Prostate gland (tissue), 2 donors: ENCODE measurements at regions of chr1 and their contacts with region 1.

Region 1: DNA sequence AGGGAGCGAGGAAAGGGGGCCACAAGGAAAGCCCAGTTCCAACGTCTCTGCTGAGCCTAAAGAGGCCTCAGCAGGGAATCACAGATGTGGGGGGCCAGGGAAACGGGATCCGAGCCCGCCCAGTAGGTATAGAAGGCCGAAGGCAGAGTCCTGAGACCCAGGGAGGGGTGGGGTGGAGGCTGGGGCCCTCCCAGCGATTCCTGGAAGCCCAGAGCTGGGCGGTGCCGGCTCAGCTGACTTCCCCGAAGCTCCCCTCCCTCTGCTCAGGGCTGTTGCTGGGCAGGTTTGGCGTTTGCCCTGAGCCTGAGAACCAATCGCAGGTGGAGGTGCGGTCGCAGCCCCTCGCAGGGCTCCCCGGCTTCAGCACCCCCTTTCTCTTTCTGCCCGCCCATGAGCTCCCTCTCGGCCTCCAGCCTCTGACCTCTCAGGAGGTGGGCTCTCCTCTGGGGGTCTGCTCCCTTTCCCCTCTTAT is 12.8 kb downstream of the ADAMTSL4 start:
- DNase-seq: peak; percentile 97
- H3K4me3 ChIP-seq: peak overlapping the region; percentile 31 to 43
- H3K27ac ChIP-seq: peak overlapping the region; percentile 100
- H3K4me1 ChIP-seq: peaks cover 40% of the 10 kb centered on the region
- H3K27me3 ChIP-seq: no peaks in the 10 kb centered on the region
- CTCF ChIP-seq: no peak
- POLR2A ChIP-seq: peak; percentile 56

Region 2: GRCh38 chr1:150578965-150579798 is 17.2 kb after region 1 on chr1 and contains the start of gene MCL1:
- intact Hi-C with region 1: loop called (anchors 2 kb)
- DNase-seq: peak; percentile 93
- H3K4me3 ChIP-seq: peak within 1 kb of the TSS; percentile 88 to 93
- H3K27ac ChIP-seq: peak within 1 kb of the TSS; percentile 98 to 100
- H3K4me1 ChIP-seq: no peaks in the 10 kb centered on the region
- H3K27me3 ChIP-seq: no peaks in the 10 kb centered on the region
- CTCF ChIP-seq: peak in 2 of 4 experiments; percentile 45 to 64
- POLR2A ChIP-seq: peak; percentile 86
- total RNA-seq, gene MCL1: 161 to 168 TPM

Region 3: DNA sequence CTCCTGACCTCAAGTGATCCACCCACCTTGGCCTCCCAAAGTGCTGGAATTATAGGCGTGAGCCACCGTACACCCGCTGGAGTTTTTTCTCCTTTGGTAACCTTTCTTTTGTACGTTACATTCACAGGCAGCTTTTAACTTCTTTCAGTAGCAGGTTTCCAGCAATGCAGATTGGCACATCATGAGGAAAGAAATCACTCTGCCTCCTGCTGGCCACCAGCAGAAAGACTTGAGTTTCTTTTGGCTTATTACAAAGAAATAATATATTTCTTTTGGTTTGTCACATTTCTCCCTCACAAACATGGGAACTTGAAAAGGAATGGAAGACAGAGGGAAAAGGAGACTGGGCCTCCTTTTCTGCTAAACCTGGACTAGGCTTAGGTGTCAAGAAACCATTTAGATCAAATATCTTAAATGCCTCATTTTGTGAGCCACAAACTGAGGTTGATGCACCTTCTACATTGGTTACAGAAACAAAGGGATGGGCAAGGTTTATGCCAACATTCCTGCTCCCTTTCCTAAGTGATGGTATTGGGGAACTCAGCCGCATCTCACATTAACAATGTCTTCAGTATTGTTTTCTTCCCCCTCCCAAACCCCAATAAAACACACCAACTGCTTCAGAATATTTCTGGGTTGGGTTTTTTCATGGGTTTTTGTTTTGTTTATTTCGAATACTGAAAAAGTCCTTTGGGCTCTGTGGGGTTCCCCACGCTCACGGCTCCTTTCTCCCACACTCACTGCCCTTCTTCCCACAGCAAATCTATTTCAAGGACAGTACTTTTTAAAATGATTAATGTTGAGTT is 59.7 kb after region 1 on chr1:
- intact Hi-C with region 1: loop called (anchors 2 kb)
- DNase-seq: peak; percentile 37
- H3K4me3 ChIP-seq: no peak overlapping the region
- H3K27ac ChIP-seq: peak overlapping the region; percentile 68 to 77
- H3K4me1 ChIP-seq: peaks cover 8% of the 10 kb centered on the region
- H3K27me3 ChIP-seq: no peaks in the 10 kb centered on the region
- CTCF ChIP-seq: peak in 3 of 4 experiments; percentile 66 to 72 (median 72)
- POLR2A ChIP-seq: no peak

Region 4: DNA sequence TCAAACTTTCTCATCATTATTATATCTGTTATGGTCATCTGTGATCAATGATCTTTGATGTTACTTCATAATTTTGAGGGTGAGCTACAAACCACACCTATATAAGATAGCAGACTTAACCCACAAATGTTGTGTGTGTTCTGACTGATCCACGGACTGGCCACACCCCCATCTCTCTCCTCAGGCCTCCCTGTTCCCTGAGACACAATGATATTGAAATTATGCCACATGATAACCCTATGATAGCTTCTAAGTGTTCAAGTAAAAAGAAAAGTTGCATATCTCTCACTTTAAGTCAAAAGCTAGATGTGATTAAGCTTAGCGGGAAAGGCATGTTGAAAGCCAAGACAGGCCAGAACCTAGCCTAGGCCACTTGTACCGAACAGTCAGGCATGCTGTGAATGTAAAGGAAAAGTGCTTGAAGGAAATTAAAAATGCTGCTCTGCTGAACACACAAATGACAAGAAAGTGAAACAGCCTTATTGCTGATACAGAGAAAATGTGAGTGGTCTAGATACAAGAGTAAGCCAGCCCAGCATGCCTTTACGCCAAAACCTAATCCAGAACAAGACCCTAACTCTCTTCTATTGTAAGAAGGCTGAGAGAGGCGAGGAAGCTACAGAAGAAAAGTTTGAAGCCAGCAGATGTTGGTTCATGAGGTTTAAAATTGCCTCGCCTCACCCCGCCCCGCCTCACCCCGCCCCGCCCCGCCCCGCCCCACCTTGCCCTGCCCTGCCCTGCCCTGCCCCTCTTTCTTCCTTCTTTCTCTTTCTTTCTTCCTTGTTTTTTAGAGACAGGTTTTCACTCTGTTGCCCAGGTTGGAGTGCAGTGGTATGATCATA is 187.1 kb after region 1 on chr1:
- intact Hi-C with region 1: no loop called
- DNase-seq: no peak
- H3K4me3 ChIP-seq: no peak overlapping the region
- H3K27ac ChIP-seq: no peak overlapping the region
- H3K4me1 ChIP-seq: no peaks in the 10 kb centered on the region
- H3K27me3 ChIP-seq: no peaks in the 10 kb centered on the region
- CTCF ChIP-seq: no peak
- POLR2A ChIP-seq: no peak

Region 5: GRCh38 chr1:150813058-150813707 is 251.2 kb after region 1 on chr1:
- intact Hi-C with region 1: loop called (anchors 5 kb)
- DNase-seq: peak; percentile 72
- H3K4me3 ChIP-seq: no peak overlapping the region
- H3K27ac ChIP-seq: peak overlapping the region; percentile 0 to 37
- H3K4me1 ChIP-seq: peaks cover 4% of the 10 kb centered on the region
- H3K27me3 ChIP-seq: no peaks in the 10 kb centered on the region
- CTCF ChIP-seq: peak; percentile 46 to 90 (median 77)
- POLR2A ChIP-seq: no peak